ENCODE measurements at regions of chr18 and their contacts with region 1.

Region 1: DNA sequence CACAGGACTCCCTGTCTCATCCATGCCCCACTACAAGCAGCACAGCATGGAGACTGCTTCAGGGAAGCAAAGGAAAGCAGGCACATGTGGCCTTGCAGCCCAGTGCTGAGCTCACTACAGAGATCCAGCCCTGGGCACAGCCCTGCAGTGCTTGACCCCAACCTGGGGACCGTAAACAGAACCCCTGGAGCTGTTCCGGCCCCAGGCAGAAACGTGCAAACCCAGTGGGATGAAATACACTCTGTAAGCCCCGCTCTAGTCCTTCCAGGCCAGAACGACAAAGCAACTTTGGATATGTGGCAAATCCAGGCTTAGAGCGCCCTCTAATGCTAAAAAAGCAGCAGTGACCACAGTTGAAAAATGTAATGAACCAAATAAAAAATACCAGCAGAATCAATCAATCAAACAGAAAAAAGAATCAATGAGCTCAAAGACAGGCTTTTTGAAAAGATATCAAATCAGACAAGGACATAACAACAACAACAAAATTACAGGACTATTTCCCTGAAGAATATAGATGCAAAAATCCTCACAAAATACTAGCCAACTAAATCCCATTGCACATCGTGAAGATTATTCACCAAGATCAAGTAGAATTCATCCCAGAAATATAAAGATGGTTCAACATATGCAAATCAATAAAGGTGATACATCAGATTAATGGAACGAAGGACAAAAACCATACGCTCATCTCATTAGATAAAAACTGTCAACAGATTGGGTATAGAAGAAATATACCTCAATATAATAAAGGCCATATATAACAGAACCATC is 45.6 kb downstream of the ZNF519 start:
- DNase-seq: no peak
- ATAC-seq: peak; percentile 73; the same call in 1 of the 2 replicates
- H3K4me3 ChIP-seq: no peak overlapping the region
- H3K27ac ChIP-seq: no peak overlapping the region
- H3K4me1 ChIP-seq: no peaks in the 10 kb centered on the region
- H3K27me3 ChIP-seq: no peaks in the 10 kb centered on the region
- CTCF ChIP-seq: peak; percentile 80

Region 2: GRCh38 chr18:13746633-13747032 is 340.0 kb before region 1 on chr18:
- CTCF ChIA-PET with region 1: no interaction called
- POLR2A ChIA-PET with region 1: no interaction called
- in situ Hi-C with region 1: no loop called
- intact Hi-C with region 1: loop called (anchors 10 kb)
- DNase-seq: no peak
- ATAC-seq: no peak
- H3K4me3 ChIP-seq: no peak overlapping the region
- H3K27ac ChIP-seq: no peak overlapping the region
- H3K4me1 ChIP-seq: no peaks in the 10 kb centered on the region
- H3K27me3 ChIP-seq: no peaks in the 10 kb centered on the region
- CTCF ChIP-seq: no peak

Region 3: GRCh38 chr18:13823707-13824395 is 262.8 kb before region 1 on chr18 and contains the start of gene MC5R:
- CTCF ChIA-PET with region 1: interaction called, 6 read pairs
- POLR2A ChIA-PET with region 1: no interaction called
- in situ Hi-C with region 1: no loop called
- intact Hi-C with region 1: loop called (anchors 5 kb)
- DNase-seq: no peak
- ATAC-seq: peak; percentile 96
- H3K4me3 ChIP-seq: peak within 1 kb of the TSS; percentile 36 to 39
- H3K27ac ChIP-seq: no peak within 1 kb of the TSS
- H3K4me1 ChIP-seq: no peaks in the 10 kb centered on the region
- H3K27me3 ChIP-seq: peaks cover 9% of the 10 kb centered on the region
- CTCF ChIP-seq: peak; percentile 97
- total RNA-seq, gene MC5R: not detected